Mammary epithelial cell (primary cell): ENCODE measurements at regions of chr17 and their contacts with region 1.

Region 1: GRCh38 chr17:7219812-7220581 is at the starts of genes ACADVL and DLG4:
- DNase-seq: peak; percentile 96
- H3K4me3 ChIP-seq: peak within 1 kb of the TSS; percentile 60 to 84 (median 64)
- H3K27ac ChIP-seq: peak within 1 kb of the TSS; percentile 84
- H3K4me1 ChIP-seq: peaks cover 22% of the 10 kb centered on the region
- H3K27me3 ChIP-seq: no peaks in the 10 kb centered on the region
- CTCF ChIP-seq: no peak
- total RNA-seq, gene ACADVL: 385 to 448 TPM
- total RNA-seq, gene DLG4: 1.5 to 10.8 TPM

Region 2: GRCh38 chr17:7156342-7156940 is 63.6 kb before region 1 on chr17:
- CTCF ChIA-PET with region 1: no interaction called
- dilution Hi-C with region 1: no loop called
- in situ Hi-C with region 1: no loop called
- intact Hi-C with region 1: no loop called
- DNase-seq: no peak
- H3K4me3 ChIP-seq: no peak overlapping the region
- H3K27ac ChIP-seq: no peak overlapping the region
- H3K4me1 ChIP-seq: no peaks in the 10 kb centered on the region
- H3K27me3 ChIP-seq: peaks cover 5% of the 10 kb centered on the region
- CTCF ChIP-seq: no peak

Region 3: DNA sequence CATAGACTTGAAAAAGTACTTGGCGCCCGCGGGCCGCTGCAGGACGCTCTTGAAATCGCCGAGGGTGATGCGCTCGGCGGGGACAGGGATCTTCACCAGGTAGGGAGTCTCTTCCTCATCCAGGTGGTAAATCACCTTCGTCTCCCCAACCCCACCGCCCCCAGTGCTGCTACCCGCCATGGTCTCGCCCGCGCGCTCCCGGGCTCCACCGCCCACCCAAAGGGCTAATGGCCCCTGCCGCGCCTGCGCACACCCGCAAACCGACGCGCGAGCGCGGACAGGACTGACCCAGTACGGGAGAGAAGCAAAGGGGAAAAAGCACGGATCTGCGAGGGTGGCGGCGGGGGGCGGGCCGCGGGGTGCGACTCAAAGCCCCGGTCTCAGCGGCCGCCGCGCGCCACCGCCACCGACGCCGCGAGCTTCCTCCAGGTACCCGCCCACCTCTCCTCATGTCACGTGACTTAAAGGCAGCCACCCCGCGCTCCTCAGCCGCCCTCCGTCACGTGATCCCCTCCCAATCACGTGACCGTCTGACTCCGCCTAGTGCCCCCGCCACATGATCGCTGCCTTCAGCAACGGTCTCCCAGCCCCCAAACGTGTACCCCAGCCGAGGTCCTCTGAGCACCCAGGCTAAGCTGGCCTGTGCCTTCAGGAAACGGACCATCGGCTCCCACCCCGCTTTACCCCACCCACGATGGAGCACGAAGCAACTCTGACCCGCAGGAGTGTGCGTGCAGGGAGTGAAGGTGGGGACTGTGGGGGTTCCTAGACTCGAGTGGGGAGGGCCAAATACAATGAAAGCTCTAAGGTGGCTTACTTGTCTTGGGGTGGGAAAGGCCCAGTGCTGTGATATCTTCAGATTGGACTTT is 14.3 kb after region 1 on chr17 and contains the start of gene DVL2:
- CTCF ChIA-PET with region 1: no interaction called
- dilution Hi-C with region 1: no loop called
- in situ Hi-C with region 1: no loop called
- intact Hi-C with region 1: loop called (anchors 1 kb)
- DNase-seq: peak; percentile 86
- H3K4me3 ChIP-seq: peak within 1 kb of the TSS; percentile 68 to 95 (median 84)
- H3K27ac ChIP-seq: peak within 1 kb of the TSS; percentile 91
- H3K4me1 ChIP-seq: peaks cover 27% of the 10 kb centered on the region
- H3K27me3 ChIP-seq: no peaks in the 10 kb centered on the region
- CTCF ChIP-seq: no peak
- total RNA-seq, gene DVL2: 43.6 to 48.0 TPM

Region 4: GRCh38 chr17:7239091-7240027 is 19.4 kb after region 1 on chr17 and contains the start of gene PHF23:
- CTCF ChIA-PET with region 1: no interaction called
- dilution Hi-C with region 1: no loop called
- in situ Hi-C with region 1: no loop called
- intact Hi-C with region 1: loop called (anchors 1 kb)
- DNase-seq: peak; percentile 100
- H3K4me3 ChIP-seq: peak within 1 kb of the TSS; percentile 84 to 92 (median 90)
- H3K27ac ChIP-seq: peak within 1 kb of the TSS; percentile 79
- H3K4me1 ChIP-seq: peaks cover 45% of the 10 kb centered on the region
- H3K27me3 ChIP-seq: no peaks in the 10 kb centered on the region
- CTCF ChIP-seq: peak in 1 of 2 donors; percentile 7
- total RNA-seq, gene PHF23: 36.7 to 53.6 TPM

Region 5: GRCh38 chr17:7252176-7253043 is 32.4 kb after region 1 on chr17 and contains the start of gene ELP5:
- CTCF ChIA-PET with region 1: no interaction called
- dilution Hi-C with region 1: no loop called
- in situ Hi-C with region 1: no loop called
- intact Hi-C with region 1: loop called (anchors 2 kb)
- DNase-seq: peak; percentile 92
- H3K4me3 ChIP-seq: peak within 1 kb of the TSS; percentile 86 to 89 (median 88)
- H3K27ac ChIP-seq: peak within 1 kb of the TSS; percentile 96
- H3K4me1 ChIP-seq: peaks cover 15% of the 10 kb centered on the region
- H3K27me3 ChIP-seq: no peaks in the 10 kb centered on the region
- CTCF ChIP-seq: peak in 1 of 2 donors; percentile 20
- total RNA-seq, gene ELP5: 18.8 to 52.0 TPM

Region 6: DNA sequence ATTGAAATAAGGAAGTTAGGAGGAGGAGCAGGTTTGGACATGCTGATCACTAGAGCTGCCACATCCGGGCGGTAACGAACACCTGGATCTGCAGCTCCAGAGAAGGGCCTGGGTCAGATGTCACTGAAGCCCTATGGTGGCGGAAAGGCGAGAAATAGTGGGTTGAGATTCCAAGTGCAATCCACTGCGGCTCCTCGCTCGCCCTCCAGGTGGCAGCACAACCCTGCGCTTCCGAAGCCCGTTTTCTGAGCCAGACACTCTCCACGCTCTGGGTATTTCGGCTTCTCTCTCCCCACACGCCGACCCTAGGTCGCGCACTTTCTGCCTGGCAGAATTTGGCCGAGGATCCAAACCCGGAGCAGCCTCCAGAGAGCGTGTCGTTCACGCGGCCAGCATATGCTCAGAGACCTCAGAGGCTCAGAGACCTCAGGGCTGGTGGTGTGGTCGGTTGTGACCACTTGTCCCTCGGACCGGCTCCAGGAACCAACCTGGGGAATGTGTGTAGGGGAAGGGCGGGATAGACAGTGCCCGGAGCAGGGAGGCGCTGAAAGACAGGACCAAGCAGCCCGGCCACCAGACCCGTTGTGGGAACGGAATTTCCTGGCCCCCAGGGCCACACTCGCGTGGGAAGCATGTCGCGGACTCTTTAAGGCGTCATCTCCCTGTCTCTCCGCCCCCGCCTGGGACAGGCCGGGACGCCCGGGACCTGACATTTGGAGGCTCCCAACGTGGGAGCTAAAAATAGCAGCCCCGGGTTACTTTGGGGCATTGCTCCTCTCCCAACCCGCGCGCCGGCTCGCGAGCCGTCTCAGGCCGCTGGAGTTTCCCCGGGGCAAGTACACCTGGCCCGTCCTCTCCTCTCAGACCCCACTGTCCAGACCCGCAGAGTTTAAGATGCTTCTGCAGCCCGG is 60.8 kb after region 1 on chr17:
- CTCF ChIA-PET with region 1: no interaction called
- dilution Hi-C with region 1: no loop called
- in situ Hi-C with region 1: no loop called
- intact Hi-C with region 1: loop called (anchors 1 kb)
- DNase-seq: peak; percentile 78
- H3K4me3 ChIP-seq: peak overlapping the region; percentile 47 to 49 (median 48)
- H3K27ac ChIP-seq: peak overlapping the region; percentile 24
- H3K4me1 ChIP-seq: peaks cover 22% of the 10 kb centered on the region
- H3K27me3 ChIP-seq: no peaks in the 10 kb centered on the region
- CTCF ChIP-seq: peak; percentile 95 to 97